PC-9 (cell line): ENCODE measurements at regions of chr5 and their contacts with region 1.

Region 1: GRCh38 chr5:57862457-57862911 is 379.9 kb upstream of the ACTBL2 start:
- DNase-seq: peak; percentile 69 to 97
- H3K4me3 ChIP-seq: no peak overlapping the region
- H3K27ac ChIP-seq: peak overlapping the region; percentile 99
- H3K4me1 ChIP-seq: peaks cover 31% of the 10 kb centered on the region
- H3K27me3 ChIP-seq: no peaks in the 10 kb centered on the region
- CTCF ChIP-seq: no peak

Region 2: GRCh38 chr5:57825031-57825683 is 37.3 kb before region 1 on chr5:
- CTCF ChIA-PET with region 1: no interaction called
- POLR2A ChIA-PET with region 1: no interaction called
- intact Hi-C with region 1: loop called (anchors 1 kb)
- DNase-seq: peak; percentile 63 to 99
- H3K4me3 ChIP-seq: no peak overlapping the region
- H3K27ac ChIP-seq: peak overlapping the region; percentile 97
- H3K4me1 ChIP-seq: peaks cover 39% of the 10 kb centered on the region
- H3K27me3 ChIP-seq: no peaks in the 10 kb centered on the region
- CTCF ChIP-seq: no peak